Sigmoid colon (tissue), 7 donors: ENCODE measurements at regions of chr2 and their contacts with region 1.

Region 1: DNA sequence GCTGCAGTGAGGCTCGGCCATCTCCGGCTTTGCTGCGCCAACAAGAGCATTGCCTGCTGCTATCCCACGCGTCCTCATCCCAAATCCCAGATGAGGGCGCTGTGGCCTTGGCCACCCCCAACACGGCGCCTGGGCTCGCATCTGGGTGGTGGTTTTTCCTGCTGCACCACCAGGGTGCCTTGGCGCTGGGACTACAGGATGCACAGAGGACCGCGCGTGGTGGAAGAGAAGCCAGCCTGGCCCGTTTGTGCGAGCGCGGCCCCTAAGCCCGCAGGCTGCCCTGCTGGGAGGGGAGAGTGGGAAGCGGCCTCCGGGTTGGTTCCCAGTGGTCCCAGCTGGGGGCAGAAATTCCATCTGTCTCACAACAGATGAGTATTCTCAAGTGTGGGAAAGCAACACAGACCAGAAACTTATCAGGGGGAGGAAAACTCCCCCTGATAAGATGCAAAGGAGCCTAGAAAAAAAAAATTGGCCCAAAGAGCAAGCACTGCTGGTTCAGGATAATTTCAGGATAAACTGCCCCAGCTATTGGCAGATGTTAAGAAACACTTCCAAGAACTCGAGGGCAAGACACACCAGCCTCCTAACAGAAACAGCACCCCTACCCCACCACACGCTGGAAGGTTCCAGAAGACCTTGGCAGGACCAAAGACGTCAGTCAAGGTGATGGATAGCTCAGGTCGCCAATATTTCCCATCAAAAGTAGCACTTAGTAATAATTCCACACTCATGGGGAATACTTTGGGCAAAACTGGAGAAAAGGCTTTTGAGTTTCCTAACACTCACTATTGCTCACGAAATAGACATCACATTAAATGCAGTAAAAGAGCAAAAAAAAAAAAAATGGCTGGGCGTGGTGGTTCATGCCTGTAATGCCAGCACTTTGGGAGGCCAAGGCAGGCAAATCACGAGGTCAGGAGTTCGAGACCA is 152.1 kb downstream of the PXDN start:
- DNase-seq: peak; percentile 92
- H3K4me3 ChIP-seq: peak overlapping the region in 1 of 4 donors; percentile 2
- H3K27ac ChIP-seq: peak overlapping the region in 3 of 4 donors; percentile 30 to 70 (median 57)
- H3K4me1 ChIP-seq: peaks cover 0 to 36% (median 25%) of the 10 kb centered on the region in 4 donors
- H3K27me3 ChIP-seq: no peaks in the 10 kb centered on the region
- CTCF ChIP-seq: peak; percentile 68 to 87 (median 84)
- EP300 ChIP-seq: no peak
- POLR2A ChIP-seq: no peak

Region 2: DNA sequence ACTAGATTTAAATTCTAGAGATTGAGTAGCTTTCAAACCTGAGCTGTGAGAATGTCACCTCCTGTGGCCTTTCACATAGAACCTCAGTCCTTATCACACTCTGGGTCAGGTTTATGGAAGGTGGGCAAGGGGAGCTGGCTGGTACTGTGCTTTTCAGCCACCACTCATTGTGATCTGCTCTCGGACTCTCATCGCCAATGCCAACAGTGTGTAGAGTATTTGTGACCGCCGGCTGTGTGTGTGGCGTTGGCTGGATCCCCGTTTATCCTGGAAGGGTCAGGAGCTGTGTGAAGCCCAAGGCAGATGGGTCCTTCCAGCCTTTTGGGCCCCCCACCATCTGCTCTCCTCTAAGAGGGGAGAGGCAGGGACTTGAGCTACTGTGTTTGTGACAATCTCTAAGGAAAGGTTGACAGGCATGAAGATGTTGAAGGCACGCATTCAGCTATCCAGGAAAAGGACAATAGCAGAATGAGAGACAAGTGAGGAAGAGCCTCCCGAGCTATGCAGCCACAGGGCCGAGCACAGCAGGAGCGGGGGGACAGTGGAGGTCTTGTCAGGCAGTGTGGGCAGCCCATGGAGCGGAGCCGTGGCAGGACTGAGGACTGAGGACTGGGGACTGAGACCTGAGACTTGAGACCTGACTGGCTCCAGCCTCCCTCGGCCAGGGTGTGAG is 286.1 kb before region 1 on chr2:
- intact Hi-C with region 1: no loop called
- DNase-seq: no peak
- H3K4me3 ChIP-seq: no peak overlapping the region
- H3K27ac ChIP-seq: no peak overlapping the region
- H3K4me1 ChIP-seq: no peaks in the 10 kb centered on the region
- H3K27me3 ChIP-seq: no peaks in the 10 kb centered on the region
- CTCF ChIP-seq: no peak
- EP300 ChIP-seq: no peak
- POLR2A ChIP-seq: no peak

Region 3: GRCh38 chr2:1653956-1654695 is 61.9 kb after region 1 on chr2:
- intact Hi-C with region 1: loop called (anchors 5 kb)
- DNase-seq: no peak
- H3K4me3 ChIP-seq: no peak overlapping the region
- H3K27ac ChIP-seq: peak overlapping the region; percentile 80 to 90 (median 86)
- H3K4me1 ChIP-seq: peaks cover 0 to 60% (median 50%) of the 10 kb centered on the region in 4 donors
- H3K27me3 ChIP-seq: no peaks in the 10 kb centered on the region
- CTCF ChIP-seq: no peak
- EP300 ChIP-seq: no peak
- POLR2A ChIP-seq: no peak

Region 4: GRCh38 chr2:1769703-1770422 is 177.6 kb after region 1 on chr2:
- intact Hi-C with region 1: loop called (anchors 5 kb)
- DNase-seq: peak; percentile 87
- H3K4me3 ChIP-seq: no peak overlapping the region
- H3K27ac ChIP-seq: no peak overlapping the region
- H3K4me1 ChIP-seq: no peaks in the 10 kb centered on the region
- H3K27me3 ChIP-seq: no peaks in the 10 kb centered on the region
- CTCF ChIP-seq: peak; percentile 45 to 78 (median 70)
- EP300 ChIP-seq: no peak
- POLR2A ChIP-seq: no peak